ENCODE measurements at regions of chr2 and their contacts with region 1.

Region 1: GRCh38 chr2:60840880-60841279 is 40.5 kb upstream of the REL start:
- DNase-seq: peak; percentile 35
- ATAC-seq: peak; percentile 63
- H3K4me3 Mint-ChIP-seq: peak overlapping the region; percentile 64
- H3K27ac Mint-ChIP-seq: peak overlapping the region; percentile 91
- H3K4me1 Mint-ChIP-seq: peaks cover 90% of the 10 kb centered on the region
- H3K27me3 Mint-ChIP-seq: no peaks in the 10 kb centered on the region
- CTCF ChIP-seq: no peak

Region 2: GRCh38 chr2:60634438-60634837 is 206.4 kb before region 1 on chr2:
- CTCF ChIA-PET with region 1: no interaction called
- POLR2A ChIA-PET with region 1: no interaction called
- intact Hi-C with region 1: no loop called
- DNase-seq: no peak
- ATAC-seq: no peak
- H3K4me3 Mint-ChIP-seq: no peak overlapping the region
- H3K27ac Mint-ChIP-seq: no peak overlapping the region
- H3K4me1 Mint-ChIP-seq: no peaks in the 10 kb centered on the region
- H3K27me3 Mint-ChIP-seq: peaks cover 12% of the 10 kb centered on the region
- CTCF ChIP-seq: no peak

Region 3: DNA sequence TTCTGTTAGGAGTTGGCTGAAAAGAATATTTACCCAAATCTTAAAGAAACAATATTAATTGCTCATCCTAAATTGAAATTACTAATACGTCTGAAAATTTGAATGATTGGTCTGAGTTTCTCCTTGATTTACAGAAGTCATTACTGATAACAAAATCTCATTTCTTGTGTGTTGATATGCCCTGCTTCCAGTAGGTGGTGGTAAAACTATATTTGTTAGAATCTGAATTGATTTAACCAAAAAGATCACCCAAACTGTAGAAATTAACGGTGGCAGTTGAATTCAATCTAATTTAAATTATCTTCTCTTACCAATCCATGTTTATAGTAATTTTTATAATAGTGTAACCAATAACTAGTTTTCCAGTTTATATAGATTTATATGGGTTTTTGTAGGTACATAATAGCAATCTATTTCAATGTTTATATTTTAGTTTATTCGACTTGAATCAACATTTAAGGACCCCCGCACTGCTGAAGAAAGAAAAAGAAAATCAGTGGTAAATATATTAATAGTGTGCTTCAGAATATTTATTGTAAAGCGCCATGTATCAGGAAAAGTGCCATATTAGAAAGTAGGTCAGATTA is 46.5 kb before region 1 on chr2:
- CTCF ChIA-PET with region 1: no interaction called
- POLR2A ChIA-PET with region 1: interaction called, 9 read pairs
- intact Hi-C with region 1: loop called (anchors 1 kb)
- DNase-seq: no peak
- ATAC-seq: peak; percentile 46
- H3K4me3 Mint-ChIP-seq: no peak overlapping the region
- H3K27ac Mint-ChIP-seq: no peak overlapping the region
- H3K4me1 Mint-ChIP-seq: peaks cover 31% of the 10 kb centered on the region
- H3K27me3 Mint-ChIP-seq: no peaks in the 10 kb centered on the region
- CTCF ChIP-seq: peak; percentile 46

Region 4: GRCh38 chr2:60818272-60818671 is 22.6 kb before region 1 on chr2:
- CTCF ChIA-PET with region 1: interaction called, 21 read pairs
- POLR2A ChIA-PET with region 1: interaction called, 16 read pairs
- intact Hi-C with region 1: loop called (anchors 1 kb)
- DNase-seq: no peak
- ATAC-seq: peak; percentile 72
- H3K4me3 Mint-ChIP-seq: peak overlapping the region; percentile 50
- H3K27ac Mint-ChIP-seq: peak overlapping the region; percentile 67
- H3K4me1 Mint-ChIP-seq: peaks cover 50% of the 10 kb centered on the region
- H3K27me3 Mint-ChIP-seq: no peaks in the 10 kb centered on the region
- CTCF ChIP-seq: no peak

Region 5: GRCh38 chr2:60861736-60862135 is 20.9 kb after region 1 on chr2:
- CTCF ChIA-PET with region 1: no interaction called
- POLR2A ChIA-PET with region 1: interaction called, 26 read pairs
- intact Hi-C with region 1: loop called (anchors 2 kb)
- DNase-seq: no peak
- ATAC-seq: no peak
- H3K4me3 Mint-ChIP-seq: peak overlapping the region; percentile 28
- H3K27ac Mint-ChIP-seq: peak overlapping the region; percentile 63
- H3K4me1 Mint-ChIP-seq: peaks cover 44% of the 10 kb centered on the region
- H3K27me3 Mint-ChIP-seq: no peaks in the 10 kb centered on the region
- CTCF ChIP-seq: no peak

Region 6: DNA sequence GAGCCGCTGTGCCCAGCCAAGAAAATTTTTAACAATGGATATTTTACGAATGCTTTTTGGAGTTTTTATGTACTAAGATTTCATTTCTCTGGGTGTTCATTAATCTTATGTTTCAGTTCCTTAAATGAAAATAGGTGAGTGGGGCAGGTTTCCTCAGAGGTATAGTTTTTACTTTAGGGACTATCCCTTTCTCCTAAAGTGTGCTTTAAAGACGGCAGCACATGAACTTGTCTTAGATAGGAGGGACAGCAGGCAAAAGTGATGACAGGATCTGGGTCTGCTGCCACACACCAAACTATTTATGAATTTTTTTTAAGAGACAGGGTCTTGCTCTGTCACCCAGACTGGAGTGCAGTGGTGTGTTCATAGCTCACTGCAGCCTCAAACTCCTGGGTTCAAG is 32.5 kb after region 1 on chr2:
- CTCF ChIA-PET with region 1: interaction called, 6 read pairs
- POLR2A ChIA-PET with region 1: interaction called, 250 read pairs
- intact Hi-C with region 1: loop called (anchors 1 kb)
- DNase-seq: no peak
- ATAC-seq: peak; percentile 83
- H3K4me3 Mint-ChIP-seq: peak overlapping the region; percentile 67
- H3K27ac Mint-ChIP-seq: peak overlapping the region; percentile 82
- H3K4me1 Mint-ChIP-seq: peaks cover 57% of the 10 kb centered on the region
- H3K27me3 Mint-ChIP-seq: no peaks in the 10 kb centered on the region
- CTCF ChIP-seq: no peak

Measured in activated B cell treated with CpG ODN at 0.5 μM for 24 hours (primary cell).